Thyroid gland (tissue), 4 donors: ENCODE measurements at regions of chr12 and their contacts with region 1.

Region 1: GRCh38 chr12:64419696-64420095 is 15.5 kb downstream of the XPOT start:
- DNase-seq: no peak
- H3K4me3 ChIP-seq: no peak overlapping the region
- H3K27ac ChIP-seq: no peak overlapping the region
- H3K4me1 ChIP-seq: no peaks in the 10 kb centered on the region
- H3K27me3 ChIP-seq: no peaks in the 10 kb centered on the region
- CTCF ChIP-seq: no peak
- POLR2A ChIP-seq: no peak

Region 2: DNA sequence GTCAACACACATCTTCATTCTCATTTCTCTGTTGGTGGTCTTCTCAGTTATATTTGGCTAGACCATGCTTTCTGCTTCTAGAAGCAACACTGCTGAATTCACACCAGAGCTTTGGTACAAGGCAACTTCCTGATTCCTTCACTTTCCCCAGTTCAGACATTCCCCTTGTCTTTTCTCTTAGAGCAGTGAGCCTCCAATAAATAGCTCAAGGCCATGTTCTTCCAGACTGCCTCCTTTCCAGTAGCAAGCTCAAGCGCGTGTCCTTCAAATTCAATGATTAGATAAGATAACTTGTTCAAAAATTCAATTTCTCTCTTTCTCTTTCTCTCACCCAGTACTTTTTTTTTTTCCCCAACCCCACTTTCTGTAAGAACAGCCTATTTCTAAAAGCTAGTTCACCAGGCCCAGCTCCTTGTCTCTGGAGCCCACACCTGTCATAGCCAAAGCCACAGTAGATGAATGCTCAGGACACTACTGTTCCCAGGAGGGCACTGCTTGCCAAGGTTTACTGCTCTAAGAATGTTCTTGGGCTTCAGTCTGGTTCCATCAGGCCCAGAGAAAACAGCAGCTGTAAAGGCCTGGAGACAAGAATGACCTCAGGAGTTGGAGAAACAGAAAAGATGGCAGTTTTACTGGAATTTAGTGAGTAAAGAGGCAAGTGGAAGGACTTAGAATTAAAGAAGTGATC is 49.9 kb after region 1 on chr12:
- intact Hi-C with region 1: no loop called
- DNase-seq: no peak
- H3K4me3 ChIP-seq: no peak overlapping the region
- H3K27ac ChIP-seq: no peak overlapping the region
- H3K4me1 ChIP-seq: no peaks in the 10 kb centered on the region
- H3K27me3 ChIP-seq: no peaks in the 10 kb centered on the region
- CTCF ChIP-seq: no peak
- POLR2A ChIP-seq: no peak

Region 3: GRCh38 chr12:64480148-64480547 is 60.5 kb after region 1 on chr12:
- intact Hi-C with region 1: loop called (anchors 10 kb)
- DNase-seq: no peak
- H3K4me3 ChIP-seq: no peak overlapping the region
- H3K27ac ChIP-seq: no peak overlapping the region
- H3K4me1 ChIP-seq: no peaks in the 10 kb centered on the region
- H3K27me3 ChIP-seq: no peaks in the 10 kb centered on the region
- CTCF ChIP-seq: no peak
- POLR2A ChIP-seq: no peak

Region 4: DNA sequence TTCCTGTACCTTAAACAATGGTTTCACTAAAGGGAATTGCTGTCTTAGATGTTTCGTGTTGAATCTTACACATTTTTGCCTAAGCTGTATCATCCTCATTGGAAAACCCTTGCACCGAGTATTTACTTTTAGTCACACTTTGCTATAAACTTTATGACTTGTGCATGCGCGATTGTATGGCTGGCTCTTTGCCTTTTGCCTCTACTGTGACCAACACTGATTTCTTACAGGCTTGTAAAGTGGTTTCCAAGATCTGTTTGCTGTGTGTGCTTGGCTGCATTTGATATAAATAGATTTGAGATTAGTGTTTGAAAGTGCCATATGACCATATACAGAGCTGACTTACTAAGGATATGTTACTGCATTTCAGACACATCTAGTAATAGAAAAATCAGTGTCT is 231.1 kb after region 1 on chr12:
- intact Hi-C with region 1: no loop called
- DNase-seq: no peak
- H3K4me3 ChIP-seq: no peak overlapping the region
- H3K27ac ChIP-seq: no peak overlapping the region
- H3K4me1 ChIP-seq: no peaks in the 10 kb centered on the region
- H3K27me3 ChIP-seq: no peaks in the 10 kb centered on the region
- CTCF ChIP-seq: no peak
- POLR2A ChIP-seq: no peak